OCI-LY7 (cell line): ENCODE measurements at regions of chr7 and their contacts with region 1.

Region 1: GRCh38 chr7:42911454-42912447 is at the start of gene C7orf25:
- DNase-seq: peak; percentile 97
- H3K4me3 ChIP-seq: peak within 1 kb of the TSS; percentile 82
- H3K27ac ChIP-seq: peak within 1 kb of the TSS; percentile 24
- H3K4me1 ChIP-seq: peaks cover 22% of the 10 kb centered on the region
- CTCF ChIP-seq: peak; percentile 44; the same call in 1 of the 2 replicates
- total RNA-seq, gene C7orf25: 2.3 and 6.0 TPM in 2 replicates

Region 2: GRCh38 chr7:42097757-42098191 is 814.0 kb before region 1 on chr7:
- CTCF ChIA-PET with region 1: no interaction called
- POLR2A ChIA-PET with region 1: no interaction called
- intact Hi-C with region 1: no loop called
- DNase-seq: no peak
- H3K4me3 ChIP-seq: no peak overlapping the region
- H3K27ac ChIP-seq: no peak overlapping the region
- H3K4me1 ChIP-seq: peaks cover 4% of the 10 kb centered on the region
- CTCF ChIP-seq: peak; percentile 42; the same call in 1 of the 2 replicates

Region 3: DNA sequence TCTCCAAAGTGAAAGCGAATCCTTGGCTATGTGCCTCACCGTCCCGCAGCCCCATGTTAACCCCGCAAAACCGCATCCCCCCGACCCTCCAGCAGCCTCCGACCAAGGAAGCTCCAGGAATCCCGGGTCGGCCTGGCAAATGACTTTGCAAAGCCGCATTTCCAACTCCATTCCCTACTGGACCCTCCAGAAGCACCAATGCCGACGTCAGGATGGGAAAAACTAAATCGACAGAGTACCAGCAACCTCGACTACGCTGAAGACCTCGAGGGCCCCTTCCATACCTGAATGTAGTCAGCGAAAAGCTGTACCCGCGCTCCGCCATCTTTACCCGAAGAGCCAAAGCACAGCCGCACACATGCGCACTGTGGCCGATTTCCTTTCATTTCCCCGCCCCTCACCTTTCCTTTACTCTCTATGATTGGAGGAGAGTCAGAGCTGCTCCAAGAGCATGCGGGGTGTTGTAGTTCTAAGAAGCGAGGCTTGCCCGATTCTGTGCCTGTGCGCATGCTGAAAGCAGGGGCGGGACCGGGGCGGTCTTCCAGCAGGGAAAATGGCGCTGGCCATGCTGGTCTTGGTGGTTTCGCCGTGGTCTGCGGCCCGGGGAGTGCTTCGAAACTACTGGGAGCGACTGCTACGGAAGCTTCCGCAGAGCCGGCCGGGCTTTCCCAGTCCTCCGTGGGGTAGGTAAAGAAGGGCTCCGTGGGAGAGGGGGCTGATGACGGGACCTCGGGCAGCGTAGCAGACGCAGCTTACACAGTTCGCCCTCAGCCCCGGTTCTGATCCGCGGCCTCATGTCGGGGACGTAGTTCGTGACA is 20.3 kb after region 1 on chr7 and contains the starts of genes MRPL32 and PSMA2:
- CTCF ChIA-PET with region 1: no interaction called
- POLR2A ChIA-PET with region 1: interaction called, 25 read pairs
- intact Hi-C with region 1: no loop called
- DNase-seq: peak; percentile 98
- H3K4me3 ChIP-seq: peak within 1 kb of the TSS; percentile 96
- H3K27ac ChIP-seq: peak within 1 kb of the TSS; percentile 58
- H3K4me1 ChIP-seq: peaks cover 41% of the 10 kb centered on the region
- CTCF ChIP-seq: no peak
- total RNA-seq, gene MRPL32: 61.8 and 89.7 TPM in 2 replicates
- total RNA-seq, gene PSMA2: 40.2 and 45.7 TPM in 2 replicates

Region 4: GRCh38 chr7:43220250-43220649 is 308.5 kb after region 1 on chr7:
- CTCF ChIA-PET with region 1: no interaction called
- POLR2A ChIA-PET with region 1: no interaction called
- intact Hi-C with region 1: no loop called
- DNase-seq: no peak
- H3K4me3 ChIP-seq: no peak overlapping the region
- H3K27ac ChIP-seq: no peak overlapping the region
- H3K4me1 ChIP-seq: no peaks in the 10 kb centered on the region
- CTCF ChIP-seq: no peak